RWPE1 (cell line): ENCODE measurements at regions of chr17 and their contacts with region 1.

Region 1: DNA sequence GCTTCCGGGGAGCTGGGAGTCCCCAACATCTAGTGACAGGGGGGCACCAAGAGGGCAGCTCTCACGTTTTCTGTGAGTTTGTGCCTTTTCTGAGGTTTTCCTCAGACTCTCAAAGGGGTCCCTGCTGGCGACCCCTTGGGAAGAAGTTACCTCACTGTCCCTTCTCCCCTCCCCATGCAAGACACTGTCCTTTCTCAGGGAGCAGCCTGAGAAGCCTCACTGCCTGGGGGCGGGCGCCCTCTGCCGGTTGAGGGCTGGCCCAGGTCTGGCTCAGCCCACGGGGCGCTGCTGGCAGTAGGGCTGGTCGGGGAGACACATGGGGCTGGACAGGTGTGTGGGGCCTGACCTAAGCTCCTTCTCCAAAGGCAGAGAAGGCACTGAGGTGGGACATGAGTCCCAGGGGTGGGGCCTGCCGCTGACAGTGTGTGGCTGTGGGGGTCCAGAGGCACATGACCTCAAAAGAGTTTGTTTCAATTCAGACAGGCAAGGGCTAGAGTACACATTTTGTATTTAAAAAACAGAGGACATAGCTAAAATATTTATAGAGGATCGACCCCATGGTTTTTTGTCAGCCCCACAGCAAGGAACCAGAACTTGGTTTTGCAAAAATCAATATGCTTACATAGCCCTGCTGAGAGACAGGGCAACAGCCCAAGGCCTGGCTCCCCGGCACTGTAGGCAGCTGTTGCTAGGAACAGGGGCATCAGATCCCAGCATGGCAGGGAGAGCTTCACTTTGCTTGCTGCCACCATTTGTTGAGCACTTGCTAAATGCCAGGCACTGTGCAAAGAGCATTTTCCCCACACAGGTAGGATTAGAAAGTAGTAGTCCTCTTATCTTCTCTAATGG is 18.5 kb upstream of the ALDH3A1 start:
- DNase-seq: peak; percentile 69
- H3K27ac ChIP-seq: peak overlapping the region; percentile 62
- CTCF ChIP-seq: peak; percentile 97

Region 2: GRCh38 chr17:19362277-19363113 is 404.2 kb before region 1 on chr17 and contains the start of gene B9D1:
- CTCF ChIA-PET with region 1: interaction called, 16 read pairs
- POLR2A ChIA-PET with region 1: no interaction called
- DNase-seq: peak; percentile 97
- H3K27ac ChIP-seq: peak within 1 kb of the TSS; percentile 89
- CTCF ChIP-seq: peak; percentile 90

Region 3: GRCh38 chr17:19513897-19514488 is 252.7 kb before region 1 on chr17:
- CTCF ChIA-PET with region 1: interaction called, 10 read pairs
- POLR2A ChIA-PET with region 1: no interaction called
- DNase-seq: peak; percentile 44
- H3K27ac ChIP-seq: peak overlapping the region; percentile 49; the same call in 1 of the 2 replicates
- CTCF ChIP-seq: peak; percentile 93

Region 4: GRCh38 chr17:19718604-19719354 is 47.9 kb before region 1 on chr17:
- CTCF ChIA-PET with region 1: interaction called, 11 read pairs
- POLR2A ChIA-PET with region 1: no interaction called
- DNase-seq: no peak
- H3K27ac ChIP-seq: peak overlapping the region; percentile 98
- CTCF ChIP-seq: no peak

Region 5: GRCh38 chr17:19753049-19753444 is 13.6 kb before region 1 on chr17:
- CTCF ChIA-PET with region 1: interaction called, 13 read pairs
- POLR2A ChIA-PET with region 1: interaction called, 3 read pairs
- DNase-seq: peak; percentile 95
- H3K27ac ChIP-seq: peak overlapping the region; percentile 100
- CTCF ChIP-seq: no peak